ENCODE measurements at regions of chr1 and their contacts with region 1.

Region 1: GRCh38 chr1:91500756-91501522 is at the start of gene CDC7:
- DNase-seq: peak; percentile 87
- ATAC-seq: peak; percentile 82
- H3K4me3 ChIP-seq: peak within 1 kb of the TSS; percentile 78
- H3K27ac ChIP-seq: peak within 1 kb of the TSS; percentile 90
- H3K4me1 ChIP-seq: peaks cover 27% of the 10 kb centered on the region
- H3K27me3 ChIP-seq: no peaks in the 10 kb centered on the region
- CTCF ChIP-seq: peak; percentile 62
- total RNA-seq, gene CDC7: 10.0 and 11.1 TPM in 2 replicates

Region 2: GRCh38 chr1:91440845-91441244 is 60.1 kb before region 1 on chr1:
- CTCF ChIA-PET with region 1: no interaction called
- POLR2A ChIA-PET with region 1: no interaction called
- intact Hi-C with region 1: loop called (anchors 2 kb)
- DNase-seq: peak; percentile 56
- ATAC-seq: peak; percentile 70
- H3K4me3 ChIP-seq: no peak overlapping the region
- H3K27ac ChIP-seq: no peak overlapping the region
- H3K4me1 ChIP-seq: no peaks in the 10 kb centered on the region
- H3K27me3 ChIP-seq: peaks cover 24% of the 10 kb centered on the region
- CTCF ChIP-seq: peak; percentile 60

Region 3: DNA sequence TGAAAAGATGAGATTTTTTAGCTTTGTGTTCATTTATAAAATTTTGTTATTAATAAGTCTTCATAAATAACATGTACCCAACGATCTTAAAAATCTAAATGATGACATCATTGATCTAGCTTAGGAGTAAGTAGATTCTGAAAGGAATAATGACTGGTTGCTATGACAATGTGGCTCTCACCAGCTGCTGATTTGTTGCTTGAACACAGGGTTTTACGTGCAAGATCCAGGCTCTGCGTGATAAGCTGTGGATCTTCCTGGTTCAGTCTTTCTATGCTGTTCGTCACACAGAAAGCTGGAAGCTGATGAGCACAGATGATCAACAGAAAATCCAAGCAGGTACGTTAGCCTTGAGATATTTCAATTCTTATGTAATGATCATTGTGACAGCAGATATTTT is 667.7 kb after region 1 on chr1:
- CTCF ChIA-PET with region 1: no interaction called
- POLR2A ChIA-PET with region 1: interaction called, 19 read pairs
- intact Hi-C with region 1: no loop called
- DNase-seq: no peak
- ATAC-seq: no peak
- H3K4me3 ChIP-seq: no peak overlapping the region
- H3K27ac ChIP-seq: no peak overlapping the region
- H3K4me1 ChIP-seq: no peaks in the 10 kb centered on the region
- H3K27me3 ChIP-seq: no peaks in the 10 kb centered on the region
- CTCF ChIP-seq: no peak

Region 4: GRCh38 chr1:92298573-92299476 is 797.9 kb after region 1 on chr1 and contains the starts of genes GLMN and RPAP2:
- CTCF ChIA-PET with region 1: no interaction called
- POLR2A ChIA-PET with region 1: no interaction called
- intact Hi-C with region 1: loop called (anchors 10 kb)
- DNase-seq: peak; percentile 89
- ATAC-seq: peak; percentile 96
- H3K4me3 ChIP-seq: peak within 1 kb of the TSS; percentile 83
- H3K27ac ChIP-seq: peak within 1 kb of the TSS; percentile 65
- H3K4me1 ChIP-seq: peaks cover 16% of the 10 kb centered on the region; the same call in 1 of the 2 replicates
- H3K27me3 ChIP-seq: no peaks in the 10 kb centered on the region
- CTCF ChIP-seq: 0 out of 2 replicates have a peak, but pooled peaks have one; percentile 26
- total RNA-seq, gene GLMN: 8.7 and 13.6 TPM in 2 replicates
- total RNA-seq, gene RPAP2: 4.1 and 4.3 TPM in 2 replicates

Measured in PC-3 (cell line).